Naive thymus-derived CD4-positive, alpha-beta T cell (primary cell): ENCODE measurements at regions of chr6 and their contacts with region 1.

Region 1: DNA sequence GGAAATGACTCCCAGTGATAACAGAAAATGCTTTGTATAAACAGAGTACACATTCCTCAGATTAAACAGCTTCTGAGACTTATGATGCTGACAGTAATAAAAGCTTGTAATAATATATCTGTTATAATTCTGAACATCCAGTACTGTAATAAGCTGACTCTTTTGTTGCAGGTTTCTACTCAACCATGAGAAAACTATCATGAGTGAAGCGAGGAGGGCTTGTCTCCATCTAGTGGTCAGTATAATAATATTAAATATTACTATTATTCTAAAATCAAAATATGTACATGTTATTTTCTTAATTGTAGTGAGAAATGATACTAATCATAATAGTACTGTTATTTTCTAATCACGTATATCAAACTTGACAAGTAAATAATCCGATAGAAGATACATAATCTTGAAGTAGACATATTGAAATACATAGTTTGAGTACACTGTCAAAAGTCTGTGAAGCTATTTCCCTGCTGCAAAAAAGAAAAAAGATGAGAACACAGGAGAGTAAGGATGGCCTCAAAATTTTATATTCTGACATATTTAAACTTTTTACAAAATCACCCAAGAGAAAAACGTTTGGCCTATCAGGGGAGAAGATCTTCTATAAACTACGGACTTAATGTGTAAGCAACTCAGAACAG is 183.1 kb downstream of the MOXD1 start:
- DNase-seq: no peak
- ATAC-seq: no peak
- H3K4me3 ChIP-seq: no peak overlapping the region
- H3K4me3 Mint-ChIP-seq: no peak overlapping the region
- H3K27ac ChIP-seq: no peak overlapping the region
- H3K27ac Mint-ChIP-seq: no peak overlapping the region
- H3K4me1 ChIP-seq: no peaks in the 10 kb centered on the region
- H3K4me1 Mint-ChIP-seq: no peaks in the 10 kb centered on the region
- H3K27me3 ChIP-seq: no peaks in the 10 kb centered on the region
- H3K27me3 Mint-ChIP-seq: peaks cover 0 to 36% (median 16%) of the 10 kb centered on the region in 5 donors

Region 2: DNA sequence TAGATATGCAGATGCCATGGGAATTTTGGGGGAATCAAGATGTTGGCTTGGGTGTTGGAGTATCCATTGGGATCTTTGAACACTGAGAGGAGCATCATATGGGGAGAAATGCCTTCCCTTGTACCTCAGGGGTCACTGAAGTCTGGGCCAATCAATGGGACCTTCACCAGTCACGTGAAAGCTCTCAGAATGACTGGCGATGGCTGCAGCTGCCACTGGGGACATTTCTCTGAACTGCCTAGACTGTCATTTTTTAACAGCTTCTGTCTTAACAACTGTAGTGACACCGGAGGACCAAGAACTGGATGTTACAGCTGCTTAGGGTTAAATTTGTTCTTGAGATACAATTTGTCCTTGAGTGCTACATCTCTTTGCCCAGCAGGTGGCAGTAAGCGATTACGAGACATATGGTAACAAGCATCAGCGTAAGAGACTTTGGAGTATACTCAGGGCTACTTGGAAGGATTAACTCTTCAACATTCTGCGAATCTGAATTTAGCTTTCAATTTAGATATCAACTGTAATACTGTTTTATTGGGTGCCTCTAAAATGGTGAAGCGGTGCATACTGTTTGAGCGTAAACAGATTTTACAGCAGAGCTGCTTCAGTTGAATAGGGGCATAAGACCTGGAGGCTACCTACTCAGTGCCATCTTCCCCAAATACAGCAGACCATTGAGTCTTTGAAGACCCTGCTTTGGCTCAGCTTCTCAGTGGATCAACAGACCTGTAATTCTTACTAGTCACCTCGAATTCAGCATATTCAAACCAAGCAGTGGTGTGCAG is 303.0 kb before region 1 on chr6:
- CTCF ChIA-PET with region 1: no interaction called
- POLR2A ChIA-PET with region 1: no interaction called
- intact Hi-C with region 1: loop called in 1 of 2 experiments (anchors 1 kb)
- DNase-seq: peak in 7 of 9 donors; percentile 12 to 43 (median 27)
- ATAC-seq: peak; percentile 70
- H3K4me3 ChIP-seq: no peak overlapping the region
- H3K4me3 Mint-ChIP-seq: no peak overlapping the region
- H3K27ac ChIP-seq: no peak overlapping the region
- H3K27ac Mint-ChIP-seq: no peak overlapping the region
- H3K4me1 ChIP-seq: no peaks in the 10 kb centered on the region
- H3K4me1 Mint-ChIP-seq: peaks cover 0 to 12% (median 6%) of the 10 kb centered on the region in 7 donors
- H3K27me3 ChIP-seq: peaks cover 0 to 4% of the 10 kb centered on the region in 2 donors
- H3K27me3 Mint-ChIP-seq: peaks cover 32 to 70% (median 58%) of the 10 kb centered on the region in 5 donors

Region 3: GRCh38 chr6:132512638-132513632 is 294.8 kb after region 1 on chr6 and contains the start of gene STX7:
- CTCF ChIA-PET with region 1: no interaction called
- POLR2A ChIA-PET with region 1: no interaction called
- intact Hi-C with region 1: no loop called
- DNase-seq: peak; percentile 77 to 90 (median 87)
- ATAC-seq: peak; percentile 95
- H3K4me3 ChIP-seq: peak within 1 kb of the TSS; percentile 78
- H3K4me3 Mint-ChIP-seq: peak within 1 kb of the TSS; percentile 89 to 99 (median 98)
- H3K27ac ChIP-seq: peak within 1 kb of the TSS; percentile 63
- H3K27ac Mint-ChIP-seq: peak within 1 kb of the TSS; percentile 81 to 95 (median 90)
- H3K4me1 ChIP-seq: peaks cover 10 to 11% of the 10 kb centered on the region in 2 donors
- H3K4me1 Mint-ChIP-seq: peaks cover 23 to 50% (median 38%) of the 10 kb centered on the region in 7 donors
- H3K27me3 ChIP-seq: no peaks in the 10 kb centered on the region
- H3K27me3 Mint-ChIP-seq: peaks cover 0 to 24% (median 0%) of the 10 kb centered on the region in 5 donors
- total RNA-seq, gene STX7: 14.7 to 43.3 (median 24.0) TPM